ENCODE measurements at regions of chr1 and their contacts with region 1.

Region 1: DNA sequence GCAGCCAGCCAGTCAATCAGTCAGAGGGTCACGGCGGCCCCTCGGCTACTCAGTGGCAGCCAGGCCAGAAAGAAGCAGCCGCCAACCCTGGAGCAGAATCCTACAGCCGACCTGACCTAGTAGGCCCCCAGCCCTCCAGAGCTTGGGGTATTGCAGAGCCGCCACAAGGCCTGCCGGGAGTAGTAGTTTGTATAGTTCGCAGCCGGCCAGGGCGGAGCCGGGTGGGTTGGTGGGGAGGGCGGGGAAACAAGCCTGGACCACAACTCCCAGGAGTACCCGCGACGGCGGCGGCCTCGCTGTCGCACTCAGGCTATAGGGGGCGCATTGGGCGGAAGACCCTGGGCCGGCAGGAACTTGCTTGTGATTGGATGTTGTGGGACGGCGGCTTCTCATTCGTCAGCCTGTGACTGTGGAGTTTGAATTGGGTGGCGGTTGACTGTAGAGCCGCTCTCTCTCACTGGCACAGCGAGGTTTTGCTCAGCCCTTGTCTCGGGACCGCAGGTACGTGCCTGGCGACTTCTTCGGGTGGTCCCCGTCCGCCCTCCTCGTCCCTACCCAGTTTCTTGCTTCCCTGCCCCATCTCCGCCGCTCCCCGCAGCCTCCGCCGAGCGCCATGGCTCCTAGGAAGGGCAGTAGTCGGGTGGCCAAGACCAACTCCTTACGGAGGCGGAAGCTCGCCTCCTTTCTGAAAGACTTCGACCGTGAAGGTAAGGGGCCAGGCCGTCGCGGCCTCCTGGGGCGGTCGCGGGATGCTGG is at the start of gene CDCA8:
- DNase-seq: peak; percentile 99
- H3K4me3 ChIP-seq: peak within 1 kb of the TSS; percentile 81 to 96 (median 92)
- H3K27ac ChIP-seq: peak within 1 kb of the TSS; percentile 49 to 90 (median 84)
- H3K4me1 ChIP-seq: peaks cover 30 to 63% (median 43%) of the 10 kb centered on the region in 6 donors
- H3K27me3 ChIP-seq: no peaks in the 10 kb centered on the region
- CTCF ChIP-seq: peak in 10 of 11 experiments; percentile 34 to 91 (median 80)
- POLR2A ChIP-seq: peak in 1 of 3 donors; percentile 55
- total RNA-seq, gene CDCA8: 1.2 to 8.2 (median 4.3) TPM

Region 2: GRCh38 chr1:37458528-37458927 is 233.7 kb before region 1 on chr1:
- intact Hi-C with region 1: loop called (anchors 5 kb)
- DNase-seq: no peak
- H3K4me3 ChIP-seq: no peak overlapping the region
- H3K27ac ChIP-seq: no peak overlapping the region
- H3K4me1 ChIP-seq: peaks cover 6 to 13% (median 9%) of the 10 kb centered on the region in 6 donors
- H3K27me3 ChIP-seq: no peaks in the 10 kb centered on the region
- CTCF ChIP-seq: peak in 1 of 11 experiments; percentile 7
- POLR2A ChIP-seq: no peak

Region 3: GRCh38 chr1:37807555-37808368 is 115.5 kb after region 1 on chr1 and contains the starts of genes C1orf122 and YRDC:
- intact Hi-C with region 1: loop called (anchors 10 kb)
- DNase-seq: peak; percentile 98
- H3K4me3 ChIP-seq: peak within 1 kb of the TSS; percentile 89 to 98 (median 96)
- H3K27ac ChIP-seq: peak within 1 kb of the TSS; percentile 87 to 98 (median 94)
- H3K4me1 ChIP-seq: peaks cover 24 to 69% (median 48%) of the 10 kb centered on the region in 6 donors
- H3K27me3 ChIP-seq: no peaks in the 10 kb centered on the region
- CTCF ChIP-seq: no peak
- POLR2A ChIP-seq: peak; percentile 60 to 79 (median 74)
- total RNA-seq, gene C1orf122: 15.9 to 31.1 (median 19.5) TPM
- total RNA-seq, gene YRDC: 8.0 to 13.4 (median 10.9) TPM

Region 4: DNA sequence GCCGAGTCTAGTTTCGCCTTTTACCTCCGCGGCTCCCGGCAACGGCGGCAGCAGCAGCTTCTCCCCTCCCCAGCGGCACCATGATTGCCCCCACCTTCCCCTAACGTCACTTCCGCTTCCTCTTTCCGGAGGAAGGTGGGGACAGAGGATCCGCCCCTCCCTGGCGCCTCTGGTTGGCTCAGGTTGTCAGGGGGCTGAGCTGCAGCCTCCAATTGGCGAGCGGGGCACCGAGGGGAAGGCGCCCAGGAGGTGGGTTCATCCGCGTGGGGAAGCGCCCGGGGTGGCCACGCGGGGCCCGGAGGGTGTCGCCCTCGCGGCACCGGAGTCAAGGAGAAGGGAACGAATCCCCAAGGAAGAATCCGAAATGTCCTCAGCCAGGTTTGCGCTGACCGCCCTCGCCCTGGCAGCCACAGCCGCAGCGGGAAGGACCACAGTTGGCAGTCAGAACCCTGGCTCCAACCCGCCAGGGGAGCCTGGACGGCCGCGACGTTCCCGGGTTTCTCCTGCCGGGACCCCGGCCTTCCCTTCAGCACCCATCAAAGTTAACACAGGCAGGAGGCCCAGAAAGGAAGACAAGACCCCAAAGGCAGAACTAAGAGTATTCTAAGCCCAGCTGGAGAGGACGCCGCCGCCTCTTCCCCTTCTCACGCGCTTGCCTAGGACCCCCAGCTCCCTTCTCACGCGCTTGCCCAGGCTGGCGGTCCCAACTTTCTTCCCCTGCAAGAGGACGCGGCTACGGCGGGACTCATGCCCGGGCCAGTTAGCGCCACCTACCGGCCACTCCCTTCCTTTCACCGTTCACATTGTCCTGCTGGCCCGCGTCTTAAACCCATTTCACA is 167.5 kb after region 1 on chr1 and contains the start of gene MTF1:
- intact Hi-C with region 1: loop called (anchors 10 kb)
- DNase-seq: peak; percentile 99
- H3K4me3 ChIP-seq: peak within 1 kb of the TSS; percentile 77 to 100 (median 98)
- H3K27ac ChIP-seq: peak within 1 kb of the TSS; percentile 85 to 98 (median 92)
- H3K4me1 ChIP-seq: peaks cover 29 to 55% (median 49%) of the 10 kb centered on the region in 6 donors
- H3K27me3 ChIP-seq: no peaks in the 10 kb centered on the region
- CTCF ChIP-seq: peak; percentile 84 to 95 (median 89)
- POLR2A ChIP-seq: peak in 1 of 3 donors; percentile 42
- total RNA-seq, gene MTF1: 9.3 to 49.8 (median 26.6) TPM

Measured in spleen (tissue), 13 donors.